ENCODE measurements at regions of chr5 and their contacts with region 1.

Region 1: GRCh38 chr5:115069087-115069968 is 100.4 kb downstream of the TRIM36 start:
- DNase-seq: peak in 1 of 5 donors; percentile 8
- ATAC-seq: peak in 1 of 4 donors; percentile 39
- H3K4me3 ChIP-seq: no peak overlapping the region
- H3K27ac ChIP-seq: no peak overlapping the region
- H3K4me1 ChIP-seq: no peaks in the 10 kb centered on the region
- H3K27me3 ChIP-seq: peaks cover 0 to 13% (median 0%) of the 10 kb centered on the region in 9 donors
- CTCF ChIP-seq: peak; percentile 24 to 64 (median 46)
- POLR2A ChIP-seq: no peak

Region 2: DNA sequence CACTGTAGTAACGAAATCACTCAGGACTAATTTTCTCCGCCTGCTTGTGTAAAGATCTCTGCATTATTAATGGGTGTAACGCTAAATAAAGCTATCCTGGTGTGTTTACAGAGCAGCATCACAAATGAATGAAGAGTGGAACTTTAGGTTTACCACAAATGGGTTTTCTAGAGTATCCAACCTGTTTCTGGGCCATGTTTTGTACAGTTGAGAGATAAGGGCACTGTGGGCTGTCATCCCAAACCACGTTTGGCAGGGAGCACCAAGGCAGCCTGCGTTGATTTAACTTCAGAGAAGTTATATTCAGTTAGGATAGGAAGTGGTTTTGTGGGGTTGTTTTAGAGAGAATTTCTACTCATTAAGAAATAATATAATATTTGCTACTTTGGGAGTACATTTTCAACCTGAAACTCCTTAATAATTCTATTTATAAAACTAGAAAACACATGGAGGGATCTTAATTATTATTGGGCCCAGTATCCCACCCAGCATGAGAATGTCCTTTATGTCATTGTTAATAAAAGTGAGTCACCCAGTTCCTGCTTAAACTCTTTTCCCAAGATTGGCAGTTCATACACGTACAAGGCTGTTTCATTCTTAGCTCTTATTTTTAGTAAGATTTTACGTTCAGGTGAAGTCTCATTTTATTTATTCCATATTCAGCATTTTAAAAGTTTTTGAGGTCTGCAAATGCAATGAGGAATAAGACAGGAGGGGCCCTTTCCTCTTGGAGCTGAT is 699.5 kb before region 1 on chr5:
- intact Hi-C with region 1: no loop called
- DNase-seq: no peak
- ATAC-seq: no peak
- H3K4me3 ChIP-seq: no peak overlapping the region
- H3K27ac ChIP-seq: peak overlapping the region in 2 of 12 donors; percentile 31 to 47
- H3K4me1 ChIP-seq: peaks cover 0 to 9% (median 0%) of the 10 kb centered on the region in 12 donors
- H3K27me3 ChIP-seq: peaks cover 0 to 4% (median 0%) of the 10 kb centered on the region in 9 donors
- CTCF ChIP-seq: no peak
- POLR2A ChIP-seq: no peak

Region 3: DNA sequence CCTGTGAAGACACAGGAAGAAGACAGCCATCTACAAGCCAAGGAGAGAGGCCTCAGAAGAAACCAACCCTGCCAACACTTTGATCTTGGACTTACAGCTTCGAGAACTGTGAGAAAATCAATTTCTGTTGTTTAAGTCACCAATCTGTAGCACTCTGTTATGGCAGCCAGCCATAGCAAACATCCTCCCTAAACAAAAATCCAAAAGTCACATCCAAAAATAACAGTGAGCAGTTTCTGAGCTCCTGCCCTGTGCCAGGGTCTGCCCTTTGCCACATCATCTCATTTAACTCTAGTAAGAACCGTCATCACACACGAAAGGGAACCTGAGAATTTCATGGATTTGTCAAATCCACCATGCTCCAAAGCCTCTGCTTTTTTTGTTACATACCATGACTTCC is 18.5 kb before region 1 on chr5:
- intact Hi-C with region 1: loop called in 1 of 10 experiments (anchors 2 kb)
- DNase-seq: no peak
- ATAC-seq: no peak
- H3K4me3 ChIP-seq: no peak overlapping the region
- H3K27ac ChIP-seq: no peak overlapping the region
- H3K4me1 ChIP-seq: no peaks in the 10 kb centered on the region
- H3K27me3 ChIP-seq: no peaks in the 10 kb centered on the region
- CTCF ChIP-seq: no peak
- POLR2A ChIP-seq: no peak

Region 4: DNA sequence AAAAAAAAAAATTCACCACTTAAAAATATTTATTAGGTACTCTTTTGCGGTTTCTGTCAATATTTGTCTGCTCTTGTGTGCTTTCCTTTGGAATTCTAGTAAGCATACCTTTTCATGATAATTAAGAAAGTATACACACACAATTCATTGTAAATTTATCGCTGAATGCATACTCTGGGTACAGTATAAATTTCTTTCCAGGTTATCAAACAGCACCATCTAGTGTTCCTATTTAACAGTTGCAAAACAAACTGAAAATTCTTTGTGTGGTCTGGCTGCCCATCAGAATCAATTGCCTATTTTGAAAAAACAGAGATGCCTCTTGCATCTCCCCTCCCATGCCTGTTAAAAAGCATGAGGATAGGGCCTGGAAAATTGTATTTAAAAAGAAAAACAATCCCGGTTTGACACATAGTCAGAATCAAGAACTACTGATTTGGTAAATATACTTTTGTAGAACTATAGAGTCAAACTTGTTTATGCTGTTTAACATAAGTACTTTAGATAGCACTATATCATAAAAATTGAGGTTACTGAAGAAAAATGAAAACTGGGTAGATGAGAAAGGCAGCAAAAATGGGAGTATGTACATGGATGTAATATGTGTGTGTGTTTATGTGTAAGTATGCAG is 177.1 kb after region 1 on chr5:
- intact Hi-C with region 1: no loop called
- DNase-seq: no peak
- ATAC-seq: peak in 1 of 4 donors; percentile 55
- H3K4me3 ChIP-seq: no peak overlapping the region
- H3K27ac ChIP-seq: no peak overlapping the region
- H3K4me1 ChIP-seq: peaks cover 0 to 27% (median 11%) of the 10 kb centered on the region in 12 donors
- H3K27me3 ChIP-seq: no peaks in the 10 kb centered on the region
- CTCF ChIP-seq: peak; percentile 59 to 80 (median 68)
- POLR2A ChIP-seq: no peak